Prostate gland (tissue), 2 donors: ENCODE measurements at regions of chr14 and their contacts with region 1.

Region 1: GRCh38 chr14:101947906-101948665 is 16.3 kb upstream of the DYNC1H1 start:
- DNase-seq: peak; percentile 100
- H3K4me3 ChIP-seq: peak overlapping the region; percentile 55 to 70
- H3K27ac ChIP-seq: peak overlapping the region; percentile 95 to 98
- H3K4me1 ChIP-seq: peaks cover 5% of the 10 kb centered on the region
- H3K27me3 ChIP-seq: no peaks in the 10 kb centered on the region
- CTCF ChIP-seq: peak in 2 of 4 experiments; percentile 15 to 17
- POLR2A ChIP-seq: peak; percentile 92

Region 2: GRCh38 chr14:101774006-101774795 is 173.9 kb before region 1 on chr14:
- intact Hi-C with region 1: loop called (anchors 5 kb)
- DNase-seq: no peak
- H3K4me3 ChIP-seq: no peak overlapping the region
- H3K27ac ChIP-seq: no peak overlapping the region
- H3K4me1 ChIP-seq: no peaks in the 10 kb centered on the region
- H3K27me3 ChIP-seq: no peaks in the 10 kb centered on the region
- CTCF ChIP-seq: no peak
- POLR2A ChIP-seq: no peak

Region 3: DNA sequence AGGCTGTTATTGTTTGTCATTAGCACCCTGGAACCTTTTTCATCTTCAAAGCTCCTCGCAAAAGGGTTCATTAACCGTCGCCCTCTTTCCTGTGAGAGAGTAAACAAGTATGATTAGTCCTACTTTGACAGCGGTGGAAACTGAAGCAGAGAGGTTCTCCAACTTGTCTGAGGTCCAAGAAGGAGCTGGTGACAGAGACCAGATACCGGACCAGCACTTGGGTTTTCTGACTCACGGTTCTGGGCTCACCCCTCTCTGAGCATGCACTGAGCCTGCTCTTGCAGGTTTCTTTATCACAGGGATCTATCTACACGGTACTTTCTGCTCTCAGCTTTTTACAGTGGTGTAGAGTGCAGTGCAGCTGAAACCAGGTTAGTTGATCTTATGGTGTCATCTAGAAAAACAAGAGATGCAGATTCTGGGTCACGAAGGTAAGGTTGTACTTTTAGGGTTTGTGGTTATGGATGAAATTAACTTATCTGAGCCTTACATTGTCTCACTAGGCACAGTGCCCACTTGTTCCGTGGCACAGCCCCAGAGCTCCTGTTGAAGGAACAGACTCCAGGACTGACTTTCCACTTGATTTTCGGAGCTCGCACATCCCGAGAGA is 124.5 kb before region 1 on chr14:
- intact Hi-C with region 1: loop called (anchors 10 kb)
- DNase-seq: no peak
- H3K4me3 ChIP-seq: no peak overlapping the region
- H3K27ac ChIP-seq: peak overlapping the region; percentile 54 to 66
- H3K4me1 ChIP-seq: peaks cover 4% of the 10 kb centered on the region
- H3K27me3 ChIP-seq: no peaks in the 10 kb centered on the region
- CTCF ChIP-seq: no peak
- POLR2A ChIP-seq: no peak

Region 4: DNA sequence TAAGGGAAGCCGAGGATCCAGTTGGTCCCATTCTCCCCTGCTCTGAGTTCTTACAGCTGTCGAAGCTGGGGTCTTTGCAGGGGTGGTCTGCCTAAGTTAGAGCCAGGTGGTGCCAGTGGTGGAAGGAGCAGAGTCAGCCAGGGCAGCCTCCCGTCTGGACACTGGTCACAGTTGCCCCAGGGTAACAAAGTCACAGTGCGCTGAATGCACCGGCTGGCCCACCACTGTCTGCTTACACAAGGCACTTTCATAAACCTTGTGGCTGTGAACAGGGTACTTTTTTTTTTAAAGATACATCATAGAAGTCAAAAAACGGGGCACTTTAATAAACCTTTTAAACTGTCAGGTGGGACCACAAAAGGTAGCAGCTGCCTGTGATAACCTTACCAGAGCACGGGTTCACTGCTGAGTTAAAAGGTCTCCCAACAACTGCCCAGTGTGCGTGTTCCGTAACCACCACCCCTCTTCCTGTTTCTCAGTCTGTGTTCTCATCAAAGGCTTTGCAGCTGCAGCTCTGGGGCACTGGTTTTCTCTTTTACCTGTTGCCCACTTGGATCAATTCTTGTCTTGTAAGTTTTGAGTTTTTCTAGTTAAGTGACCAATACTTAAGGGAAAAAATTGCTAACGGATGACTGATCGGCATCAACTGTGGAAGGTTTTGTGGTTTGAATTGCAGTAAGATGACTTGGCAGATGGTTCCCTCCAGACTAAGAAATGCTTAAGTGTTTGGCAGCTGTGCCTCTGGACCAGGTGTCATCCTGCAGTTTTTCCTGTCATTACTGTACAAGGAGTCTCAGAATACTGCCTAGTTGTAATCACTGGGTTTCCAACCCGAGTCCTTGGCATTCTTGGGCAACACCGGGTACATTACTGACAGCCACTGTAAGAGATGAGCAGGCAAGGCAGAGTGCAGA is 72.2 kb after region 1 on chr14:
- intact Hi-C with region 1: no loop called
- DNase-seq: no peak
- H3K4me3 ChIP-seq: no peak overlapping the region
- H3K27ac ChIP-seq: no peak overlapping the region
- H3K4me1 ChIP-seq: no peaks in the 10 kb centered on the region
- H3K27me3 ChIP-seq: no peaks in the 10 kb centered on the region
- CTCF ChIP-seq: no peak
- POLR2A ChIP-seq: no peak